ENCODE measurements at regions of chr17 and their contacts with region 1.

Region 1: DNA sequence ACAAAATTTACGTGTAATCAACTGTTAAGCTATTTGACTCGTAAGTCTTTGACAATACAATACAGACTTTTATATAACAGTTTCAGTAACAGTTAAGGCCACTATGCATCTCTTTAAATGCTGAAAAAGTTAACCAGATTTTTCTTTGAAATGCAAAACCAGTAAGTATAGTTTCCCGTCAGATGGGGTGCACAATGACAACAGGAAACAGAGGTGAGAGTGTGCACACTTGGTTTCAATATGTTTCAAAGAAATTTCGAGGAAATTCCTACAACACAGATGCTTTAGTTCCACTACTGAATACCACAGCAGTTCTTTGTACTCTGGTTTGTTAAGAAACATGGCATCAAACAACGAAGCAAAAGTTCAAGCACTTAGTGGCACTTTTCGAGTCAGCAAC is 48.4 kb downstream of the RNF157 start:
- DNase-seq: peak; percentile 71
- H3K4me3 Mint-ChIP-seq: peak overlapping the region; percentile 55
- H3K27ac Mint-ChIP-seq: peak overlapping the region; percentile 96
- H3K4me1 Mint-ChIP-seq: peaks cover 92% of the 10 kb centered on the region
- H3K27me3 Mint-ChIP-seq: no peaks in the 10 kb centered on the region

Region 2: DNA sequence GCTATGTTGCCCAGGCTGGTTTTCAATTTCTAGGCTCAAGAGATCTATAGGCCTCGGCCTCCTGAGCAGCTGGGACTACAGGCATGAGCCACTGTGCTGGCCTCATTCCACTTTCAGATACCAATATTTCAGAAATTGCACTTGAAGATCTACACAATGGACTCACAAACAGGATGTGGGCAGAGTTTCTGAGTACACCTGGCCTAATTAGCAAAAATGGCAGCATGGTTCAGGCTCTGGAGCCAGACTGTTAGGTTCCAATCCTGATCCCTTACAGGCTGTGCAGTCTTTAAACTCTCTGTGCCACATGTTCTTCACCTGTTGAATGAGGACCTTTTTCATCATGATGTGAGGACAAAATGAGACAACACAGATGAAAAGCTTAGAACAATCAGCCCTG is 16.2 kb after region 1 on chr17:
- CTCF ChIA-PET with region 1: interaction called, 12 read pairs
- DNase-seq: peak; percentile 40
- H3K4me3 Mint-ChIP-seq: peak overlapping the region; percentile 14
- H3K27ac Mint-ChIP-seq: peak overlapping the region; percentile 91
- H3K4me1 Mint-ChIP-seq: peaks cover 78% of the 10 kb centered on the region
- H3K27me3 Mint-ChIP-seq: no peaks in the 10 kb centered on the region

Region 3: DNA sequence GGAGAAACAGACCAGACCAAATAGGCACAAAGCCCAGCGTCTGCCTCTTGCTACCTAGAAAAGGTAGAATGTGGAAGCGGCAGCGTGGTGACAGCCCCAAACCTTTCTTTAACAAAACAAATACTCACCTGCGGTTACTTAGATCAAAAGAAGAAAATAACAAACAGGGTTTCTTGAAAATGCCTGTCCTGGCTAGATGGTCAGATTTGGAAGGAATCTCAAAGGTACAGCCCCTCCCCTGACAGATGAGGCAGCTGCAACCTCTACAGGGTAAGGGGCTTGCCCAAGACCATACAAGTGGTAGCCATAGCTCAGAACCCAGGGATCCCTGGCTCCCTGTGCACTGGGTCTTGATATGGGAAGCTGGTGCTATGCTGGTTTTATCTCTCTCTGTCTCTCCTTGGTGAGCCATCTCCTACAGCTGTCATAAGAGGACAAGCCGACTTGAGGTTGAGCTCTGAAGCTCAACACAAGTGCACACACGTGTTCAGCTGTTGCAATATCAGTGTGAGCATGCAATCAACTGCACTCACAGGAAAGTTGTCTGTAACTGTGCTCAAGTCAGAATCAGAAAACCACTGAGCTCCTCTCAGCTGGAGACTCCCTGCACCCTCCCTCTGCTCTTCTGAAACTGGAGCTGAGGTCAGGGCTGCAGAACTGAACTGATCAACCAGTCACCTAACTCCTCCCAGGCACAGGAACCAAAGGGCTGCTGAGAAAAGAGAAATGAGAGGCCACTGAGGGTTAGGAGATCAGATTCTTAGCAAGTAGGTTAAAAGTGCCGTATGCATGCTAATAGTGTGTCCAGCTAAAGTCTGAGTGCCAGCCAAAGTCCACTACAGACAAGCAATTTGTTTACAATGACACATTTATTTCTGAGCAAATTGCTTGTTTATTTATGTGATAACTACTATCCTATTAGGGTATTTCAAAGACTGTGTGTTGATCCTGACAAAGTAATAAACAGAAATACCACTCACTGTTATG is 54.5 kb after region 1 on chr17:
- CTCF ChIA-PET with region 1: interaction called, 10 read pairs
- DNase-seq: peak; percentile 86
- H3K4me3 Mint-ChIP-seq: peak overlapping the region; percentile 22
- H3K27ac Mint-ChIP-seq: peak overlapping the region; percentile 90
- H3K4me1 Mint-ChIP-seq: peaks cover 88% of the 10 kb centered on the region
- H3K27me3 Mint-ChIP-seq: no peaks in the 10 kb centered on the region

Measured in activated naive CD4-positive, alpha-beta T cell treated with anti-CD3 and anti-CD28 coated beads, Interleukin-2, amount 10 ng/mL, durations not matched to agents 7 days and 5 days (primary cell).